PC-9 (cell line): ENCODE measurements at regions of chr7 and their contacts with region 1.

Region 1: GRCh38 chr7:108340856-108341411 is 115.3 kb downstream of the NRCAM start:
- DNase-seq: peak; percentile 90 to 94
- H3K4me3 ChIP-seq: peak overlapping the region; percentile 38; the same call in 1 of the 2 replicates
- H3K27ac ChIP-seq: peak overlapping the region; percentile 72
- H3K4me1 ChIP-seq: peaks cover 47% of the 10 kb centered on the region
- H3K27me3 ChIP-seq: no peaks in the 10 kb centered on the region
- CTCF ChIP-seq: no peak

Region 2: GRCh38 chr7:108146070-108146837 is 194.7 kb before region 1 on chr7:
- CTCF ChIA-PET with region 1: no interaction called
- POLR2A ChIA-PET with region 1: no interaction called
- intact Hi-C with region 1: no loop called
- DNase-seq: peak; percentile 70 to 71
- H3K4me3 ChIP-seq: no peak overlapping the region
- H3K27ac ChIP-seq: no peak overlapping the region
- H3K4me1 ChIP-seq: no peaks in the 10 kb centered on the region
- H3K27me3 ChIP-seq: no peaks in the 10 kb centered on the region
- CTCF ChIP-seq: peak; percentile 89

Region 3: DNA sequence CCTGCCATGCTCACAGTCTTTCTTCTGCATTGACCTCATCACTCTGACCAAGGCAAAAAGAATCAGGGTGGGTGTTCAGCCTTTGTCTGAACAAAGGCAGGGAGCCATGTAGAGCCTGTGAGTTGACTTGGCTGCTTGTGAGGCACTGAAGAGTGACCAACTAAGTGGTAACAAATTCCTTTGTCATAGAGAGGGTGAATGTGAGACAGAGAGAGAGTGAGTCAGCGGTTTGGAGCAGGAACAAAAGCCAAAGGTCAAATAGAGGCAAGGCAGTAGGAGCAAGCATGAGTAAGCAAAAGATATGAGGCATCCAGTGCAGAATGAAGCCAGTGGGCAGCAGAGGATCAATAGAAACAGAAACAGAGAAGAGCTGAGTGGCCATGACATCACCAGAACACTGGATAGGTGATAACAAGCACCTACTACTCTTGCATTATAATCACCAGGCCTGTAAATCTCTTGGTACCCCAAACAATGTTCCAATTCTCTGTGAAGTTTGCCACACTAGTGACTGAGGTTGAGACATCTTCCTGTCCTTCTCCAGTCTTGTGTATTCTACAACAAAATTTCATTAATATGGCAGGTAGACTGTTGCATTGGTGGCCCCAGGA is 94.6 kb before region 1 on chr7:
- CTCF ChIA-PET with region 1: no interaction called
- POLR2A ChIA-PET with region 1: no interaction called
- intact Hi-C with region 1: loop called (anchors 1 kb)
- DNase-seq: peak; percentile 87 to 94
- H3K4me3 ChIP-seq: peak overlapping the region; percentile 15
- H3K27ac ChIP-seq: peak overlapping the region; percentile 92
- H3K4me1 ChIP-seq: peaks cover 46% of the 10 kb centered on the region
- H3K27me3 ChIP-seq: no peaks in the 10 kb centered on the region
- CTCF ChIP-seq: no peak

Region 4: DNA sequence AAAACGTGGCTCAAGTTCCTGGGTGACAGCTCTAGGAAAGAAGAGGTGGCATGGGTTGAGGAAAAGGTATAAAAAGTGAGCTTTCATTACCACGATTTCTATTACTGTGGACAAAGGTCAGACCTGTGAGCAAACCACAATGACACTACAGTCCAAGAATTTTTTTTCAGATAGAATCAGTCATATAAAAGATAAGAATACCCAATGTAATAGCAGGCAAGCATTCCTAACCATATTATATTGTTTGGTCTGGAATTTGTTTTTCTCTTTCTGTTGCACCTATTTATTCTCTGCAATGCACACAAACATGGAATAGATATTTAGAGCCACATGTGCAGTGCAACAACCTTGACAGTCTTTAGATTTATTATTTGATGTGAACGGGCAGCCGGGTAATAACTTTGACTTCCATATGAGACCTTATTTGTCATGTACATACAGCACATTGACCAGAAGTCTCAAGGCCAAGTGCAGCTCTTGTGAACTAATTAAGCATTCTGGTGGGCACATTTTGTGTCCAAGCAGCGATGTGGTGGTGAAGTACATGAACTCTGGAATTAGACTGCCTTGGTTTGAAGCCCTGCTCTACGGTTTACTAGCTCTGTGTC is 41.5 kb before region 1 on chr7:
- CTCF ChIA-PET with region 1: interaction called, 4 read pairs
- POLR2A ChIA-PET with region 1: no interaction called
- intact Hi-C with region 1: loop called (anchors 1 kb)
- DNase-seq: peak; percentile 53 to 91
- H3K4me3 ChIP-seq: no peak overlapping the region
- H3K27ac ChIP-seq: peak overlapping the region; percentile 63
- H3K4me1 ChIP-seq: peaks cover 30% of the 10 kb centered on the region
- H3K27me3 ChIP-seq: no peaks in the 10 kb centered on the region
- CTCF ChIP-seq: no peak

Region 5: GRCh38 chr7:108308903-108309302 is 32.0 kb before region 1 on chr7:
- CTCF ChIA-PET with region 1: no interaction called
- POLR2A ChIA-PET with region 1: no interaction called
- intact Hi-C with region 1: loop called (anchors 2 kb)
- DNase-seq: peak; percentile 32 to 74
- H3K4me3 ChIP-seq: no peak overlapping the region
- H3K27ac ChIP-seq: peak overlapping the region; percentile 45
- H3K4me1 ChIP-seq: peaks cover 36% of the 10 kb centered on the region
- H3K27me3 ChIP-seq: no peaks in the 10 kb centered on the region
- CTCF ChIP-seq: no peak

Region 6: DNA sequence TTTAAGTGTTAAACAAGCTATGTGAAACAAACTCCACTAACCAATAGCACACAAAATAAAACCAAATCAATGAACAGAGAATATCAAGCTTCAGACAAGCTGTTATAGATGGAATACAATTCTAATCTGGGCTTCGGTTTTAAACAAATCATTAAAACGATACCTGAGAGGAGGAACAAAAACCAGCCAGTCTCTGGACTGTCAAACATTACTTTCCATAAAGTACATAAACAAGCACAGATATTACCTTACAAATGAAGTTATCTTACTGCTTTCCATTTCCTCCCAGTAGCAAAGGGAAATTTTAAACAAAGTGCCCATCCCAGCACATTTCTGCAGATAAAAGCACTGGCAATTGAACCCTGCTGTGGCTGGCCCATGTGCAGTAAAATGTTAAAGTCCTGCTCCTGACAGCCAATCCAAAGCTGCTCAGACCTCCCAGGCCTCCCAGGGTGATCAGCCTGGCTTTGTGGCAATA is 12.7 kb before region 1 on chr7:
- CTCF ChIA-PET with region 1: no interaction called
- POLR2A ChIA-PET with region 1: no interaction called
- intact Hi-C with region 1: no loop called
- DNase-seq: no peak
- H3K4me3 ChIP-seq: no peak overlapping the region
- H3K27ac ChIP-seq: no peak overlapping the region
- H3K4me1 ChIP-seq: peaks cover 9% of the 10 kb centered on the region
- H3K27me3 ChIP-seq: no peaks in the 10 kb centered on the region
- CTCF ChIP-seq: no peak

Region 7: DNA sequence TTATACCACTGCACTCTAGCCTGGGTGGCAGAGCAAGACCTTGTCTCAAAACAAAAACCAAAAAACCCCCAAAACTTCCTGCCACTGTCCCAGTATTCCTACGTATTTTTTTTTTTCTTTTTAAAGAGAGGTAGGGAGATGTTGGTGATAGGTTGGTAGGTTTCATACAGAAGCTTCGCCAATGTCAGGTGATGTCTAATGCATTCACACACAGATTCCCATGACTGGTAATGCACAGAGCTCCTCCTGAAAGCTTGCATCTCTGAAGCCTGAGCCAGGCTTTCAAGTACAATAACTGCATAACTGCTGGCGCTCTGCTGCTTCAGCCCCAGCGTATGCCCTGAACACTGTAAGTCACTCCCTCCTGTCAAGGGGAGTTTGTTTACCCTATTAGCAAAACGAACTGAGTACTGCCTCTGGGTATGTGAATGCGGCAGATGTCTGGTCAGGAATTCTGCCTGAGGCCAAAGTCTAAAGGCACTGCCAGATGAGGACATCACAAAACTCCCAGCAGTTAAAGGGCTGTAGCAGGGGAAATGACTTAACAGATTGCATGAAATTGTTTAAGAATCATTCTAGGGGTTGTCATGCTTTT is 17.5 kb after region 1 on chr7:
- CTCF ChIA-PET with region 1: interaction called, 7 read pairs
- POLR2A ChIA-PET with region 1: no interaction called
- intact Hi-C with region 1: loop called (anchors 1 kb)
- DNase-seq: peak; percentile 81 to 93
- H3K4me3 ChIP-seq: no peak overlapping the region
- H3K27ac ChIP-seq: 0 out of 2 replicates have a peak overlapping the region, but pooled peaks have one; percentile 3
- H3K4me1 ChIP-seq: peaks cover 13% of the 10 kb centered on the region
- H3K27me3 ChIP-seq: no peaks in the 10 kb centered on the region
- CTCF ChIP-seq: no peak

Region 8: DNA sequence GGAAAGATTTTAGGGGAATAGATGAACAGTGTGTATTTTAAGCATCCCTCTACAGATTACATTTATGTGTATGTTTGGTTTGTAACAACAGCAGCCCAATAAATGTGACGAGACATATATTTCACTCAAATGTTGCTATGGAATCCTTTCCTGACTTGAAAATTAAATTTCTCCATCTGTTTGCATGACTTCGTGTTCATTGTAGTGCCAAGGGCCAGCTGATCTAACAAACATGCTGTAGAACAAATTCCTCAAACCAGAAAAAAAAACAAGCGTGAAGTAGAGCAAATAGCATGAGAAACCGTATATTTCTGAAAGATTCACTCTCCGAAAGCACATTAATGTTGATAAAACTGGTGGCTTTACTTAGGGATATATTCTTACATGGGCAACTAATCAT is 27.5 kb after region 1 on chr7:
- CTCF ChIA-PET with region 1: no interaction called
- POLR2A ChIA-PET with region 1: no interaction called
- intact Hi-C with region 1: no loop called
- DNase-seq: no peak
- H3K4me3 ChIP-seq: no peak overlapping the region
- H3K27ac ChIP-seq: no peak overlapping the region
- H3K4me1 ChIP-seq: no peaks in the 10 kb centered on the region
- H3K27me3 ChIP-seq: no peaks in the 10 kb centered on the region
- CTCF ChIP-seq: no peak

Region 9: DNA sequence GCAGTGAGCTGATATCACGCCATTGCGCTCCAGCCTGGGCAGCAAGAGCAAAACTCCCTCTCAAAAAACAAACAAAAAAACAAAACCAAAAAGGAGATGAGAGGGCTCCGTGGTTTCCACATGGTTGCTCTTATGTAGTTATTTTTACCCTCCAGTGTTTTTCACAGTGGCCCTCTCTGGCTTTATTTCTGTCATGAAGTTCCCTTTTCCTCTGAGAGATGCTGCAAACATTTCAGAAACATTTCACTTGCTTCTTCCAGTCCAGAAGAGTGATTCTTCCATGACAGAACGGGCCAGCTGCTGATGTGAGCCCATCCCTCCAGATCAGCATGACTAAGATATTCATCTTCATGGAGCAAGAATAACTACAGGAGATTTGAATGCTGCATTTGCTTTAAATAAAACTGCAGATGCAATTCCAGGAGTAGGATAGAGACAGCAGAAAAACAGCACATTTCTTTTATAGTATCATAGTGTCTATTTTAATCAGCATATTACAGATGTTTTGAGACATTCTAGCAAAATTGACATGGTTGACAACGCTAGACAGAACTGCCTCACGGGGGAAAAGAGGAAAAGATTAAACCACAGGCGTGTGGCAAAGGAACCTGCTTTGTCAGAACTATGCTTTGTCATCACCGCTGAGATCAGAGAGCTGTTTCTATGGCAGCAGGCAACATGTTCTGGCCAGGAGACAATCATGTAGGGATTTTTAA is 75.0 kb after region 1 on chr7:
- CTCF ChIA-PET with region 1: no interaction called
- POLR2A ChIA-PET with region 1: no interaction called
- intact Hi-C with region 1: loop called (anchors 2 kb)
- DNase-seq: peak; percentile 53 to 54
- H3K4me3 ChIP-seq: no peak overlapping the region
- H3K27ac ChIP-seq: 0 out of 2 replicates have a peak overlapping the region, but pooled peaks have one; percentile 10
- H3K4me1 ChIP-seq: peaks cover 18% of the 10 kb centered on the region; the same call in 1 of the 2 replicates
- H3K27me3 ChIP-seq: no peaks in the 10 kb centered on the region
- CTCF ChIP-seq: no peak

Region 10: DNA sequence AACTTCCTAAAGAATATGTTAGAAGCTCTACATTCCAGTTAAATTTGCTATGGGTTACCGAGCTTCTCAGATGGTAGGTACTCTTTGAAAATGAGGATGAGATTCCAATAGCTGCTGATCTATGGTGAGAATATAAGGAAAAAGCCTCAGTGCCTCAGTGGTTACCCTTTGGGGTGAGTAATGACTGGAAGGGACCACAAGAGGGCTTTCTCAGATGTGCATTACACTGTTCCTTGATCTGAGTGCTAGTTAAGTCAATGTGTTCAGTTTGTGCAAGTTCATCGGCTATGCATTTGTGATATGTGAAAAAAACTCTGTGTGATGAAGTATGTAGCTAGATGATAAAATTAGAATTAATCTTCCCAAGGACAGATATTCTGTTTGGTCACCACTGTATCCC is 111.8 kb after region 1 on chr7:
- CTCF ChIA-PET with region 1: no interaction called
- POLR2A ChIA-PET with region 1: interaction called, 3 read pairs
- intact Hi-C with region 1: loop called (anchors 2 kb)
- DNase-seq: no peak
- H3K4me3 ChIP-seq: no peak overlapping the region
- H3K27ac ChIP-seq: no peak overlapping the region
- H3K4me1 ChIP-seq: 0 out of 2 replicates have a peak, but pooled peaks cover 12% of the 10 kb centered on the region
- H3K27me3 ChIP-seq: no peaks in the 10 kb centered on the region
- CTCF ChIP-seq: peak; percentile 66